ENCODE measurements at regions of chr9 and their contacts with region 1.

Region 1: GRCh38 chr9:71768388-71769174 is at the start of gene CEMIP2:
- DNase-seq: peak; percentile 44 to 92
- H3K4me3 ChIP-seq: peak within 1 kb of the TSS; percentile 78 to 89
- H3K27ac ChIP-seq: peak within 1 kb of the TSS; percentile 96 to 99
- H3K4me1 ChIP-seq: peaks cover 0 to 21% of the 10 kb centered on the region in 2 donors
- H3K27me3 ChIP-seq: no peaks in the 10 kb centered on the region
- CTCF ChIP-seq: peak in 1 of 3 experiments; percentile 18
- total RNA-seq, gene CEMIP2: 34.4 TPM

Region 2: DNA sequence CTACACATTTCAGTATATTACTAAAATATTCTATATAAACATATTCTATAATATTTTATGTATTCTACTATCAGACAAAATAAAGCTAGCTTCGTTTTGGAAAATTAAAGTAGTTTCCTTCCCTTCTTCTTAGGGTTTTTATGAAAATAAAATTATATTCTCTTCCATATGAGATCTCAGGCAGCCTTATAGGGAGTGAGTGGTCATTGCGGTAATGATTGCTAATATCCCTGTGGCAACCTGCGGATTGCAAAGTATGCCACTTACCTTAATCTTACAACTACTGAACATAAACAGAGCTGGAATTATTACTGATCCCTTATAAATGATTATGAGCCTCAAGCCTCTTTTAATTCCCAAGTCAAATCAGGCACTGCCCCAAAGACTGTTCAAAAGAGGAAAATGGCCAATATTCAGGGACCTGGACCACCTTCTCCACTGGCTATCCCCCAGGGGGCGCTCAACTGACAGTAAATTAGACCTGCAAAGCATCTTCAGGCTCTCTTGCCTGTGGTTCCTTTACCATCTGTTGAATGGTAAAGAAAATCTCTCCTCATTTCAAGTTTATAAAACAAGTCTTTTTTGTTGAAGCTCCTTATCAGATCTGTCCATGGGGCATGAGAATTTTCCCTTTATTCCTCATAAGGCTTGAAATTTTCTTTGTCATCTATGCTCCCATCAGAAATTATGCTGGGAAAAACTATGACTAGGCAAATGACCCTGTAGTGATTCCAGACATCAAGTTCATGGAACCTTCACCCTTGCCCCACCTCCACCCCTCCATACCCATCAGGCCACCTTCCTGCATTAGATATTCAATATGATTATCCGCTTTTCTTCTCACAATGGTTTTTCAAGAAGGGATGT is 164.2 kb before region 1 on chr9:
- intact Hi-C with region 1: loop called (anchors 5 kb)
- DNase-seq: peak in 1 of 2 donors; percentile 71
- H3K4me3 ChIP-seq: no peak overlapping the region
- H3K27ac ChIP-seq: no peak overlapping the region
- H3K4me1 ChIP-seq: peaks cover 0 to 10% of the 10 kb centered on the region in 2 donors
- H3K27me3 ChIP-seq: no peaks in the 10 kb centered on the region
- CTCF ChIP-seq: peak; percentile 38 to 48 (median 47)

Region 3: GRCh38 chr9:71748280-71748743 is 20.3 kb before region 1 on chr9:
- intact Hi-C with region 1: loop called (anchors 2 kb)
- DNase-seq: no peak
- H3K4me3 ChIP-seq: no peak overlapping the region
- H3K27ac ChIP-seq: peak overlapping the region in 1 of 2 donors; percentile 29
- H3K4me1 ChIP-seq: peaks cover 0 to 4% of the 10 kb centered on the region in 2 donors
- H3K27me3 ChIP-seq: no peaks in the 10 kb centered on the region
- CTCF ChIP-seq: no peak

Region 4: GRCh38 chr9:71812385-71812784 is 43.8 kb after region 1 on chr9:
- intact Hi-C with region 1: loop called (anchors 2 kb)
- DNase-seq: peak in 1 of 2 donors; percentile 82
- H3K4me3 ChIP-seq: no peak overlapping the region
- H3K27ac ChIP-seq: peak overlapping the region; percentile 52 to 67
- H3K4me1 ChIP-seq: peaks cover 3 to 30% of the 10 kb centered on the region in 2 donors
- H3K27me3 ChIP-seq: no peaks in the 10 kb centered on the region
- CTCF ChIP-seq: peak; percentile 9 to 44 (median 40)

Measured in ascending aorta (tissue), 2 donors.